Activated CD4-positive, alpha-beta T cell treated with anti-CD3 and anti-CD28 coated beads for 36 hours (primary cell): ENCODE measurements at regions of chr2 and their contacts with region 1.

Region 1: DNA sequence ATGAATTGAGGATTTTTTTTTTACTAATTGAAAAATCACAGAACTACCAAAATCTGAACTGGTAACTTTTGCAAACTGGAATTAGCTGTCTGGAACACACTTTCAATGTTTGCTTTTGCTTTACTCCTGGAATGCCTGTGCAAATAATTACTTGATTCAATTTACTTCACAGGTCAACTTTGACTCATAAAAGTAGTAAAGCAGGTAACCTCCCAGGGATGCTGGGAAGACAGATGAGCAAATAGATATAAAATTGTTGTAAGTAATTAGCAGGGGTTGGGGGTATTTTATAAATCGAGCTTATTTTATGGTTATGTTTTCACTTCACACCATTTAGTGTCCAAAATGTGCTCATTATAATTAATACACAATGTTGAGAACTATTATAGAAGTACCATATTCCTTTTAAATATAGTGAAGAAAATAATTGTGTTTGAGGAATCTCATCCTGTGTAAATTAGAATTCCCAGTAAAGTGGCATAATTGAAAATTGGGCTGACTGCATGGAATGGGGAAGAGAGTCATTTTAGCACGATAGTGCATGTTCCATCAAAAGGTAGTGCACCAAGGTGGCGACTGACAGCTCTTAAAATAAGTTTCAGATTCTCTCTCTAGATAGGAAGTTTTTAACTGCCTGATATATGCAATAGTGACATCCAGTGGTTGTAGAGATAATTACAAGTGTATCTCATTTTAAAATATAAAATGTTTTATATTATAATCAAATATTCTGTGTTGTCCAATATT is 398.1 kb upstream of the HNRNPA3 start:
- DNase-seq: peak; percentile 9
- ATAC-seq: peak; percentile 43
- H3K4me3 Mint-ChIP-seq: no peak overlapping the region
- H3K27ac Mint-ChIP-seq: no peak overlapping the region
- H3K4me1 Mint-ChIP-seq: peaks cover 14% of the 10 kb centered on the region
- H3K27me3 Mint-ChIP-seq: no peaks in the 10 kb centered on the region

Region 2: GRCh38 chr2:176565641-176566323 is 248.7 kb before region 1 on chr2:
- CTCF ChIA-PET with region 1: no interaction called
- POLR2A ChIA-PET with region 1: no interaction called
- intact Hi-C with region 1: no loop called
- DNase-seq: peak; percentile 4
- ATAC-seq: no peak
- H3K4me3 Mint-ChIP-seq: no peak overlapping the region
- H3K27ac Mint-ChIP-seq: no peak overlapping the region
- H3K4me1 Mint-ChIP-seq: no peaks in the 10 kb centered on the region
- H3K27me3 Mint-ChIP-seq: peaks cover 38% of the 10 kb centered on the region

Region 3: GRCh38 chr2:176781570-176782217 is 32.8 kb before region 1 on chr2:
- CTCF ChIA-PET with region 1: no interaction called
- POLR2A ChIA-PET with region 1: no interaction called
- intact Hi-C with region 1: no loop called
- DNase-seq: no peak
- ATAC-seq: peak; percentile 44
- H3K4me3 Mint-ChIP-seq: no peak overlapping the region
- H3K27ac Mint-ChIP-seq: peak overlapping the region; percentile 7
- H3K4me1 Mint-ChIP-seq: peaks cover 4% of the 10 kb centered on the region
- H3K27me3 Mint-ChIP-seq: no peaks in the 10 kb centered on the region

Region 4: GRCh38 chr2:176804392-176804791 is 10.1 kb before region 1 on chr2:
- CTCF ChIA-PET with region 1: interaction called, 10 read pairs
- POLR2A ChIA-PET with region 1: no interaction called
- intact Hi-C with region 1: no loop called
- DNase-seq: no peak
- ATAC-seq: no peak
- H3K4me3 Mint-ChIP-seq: no peak overlapping the region
- H3K27ac Mint-ChIP-seq: no peak overlapping the region
- H3K4me1 Mint-ChIP-seq: no peaks in the 10 kb centered on the region
- H3K27me3 Mint-ChIP-seq: no peaks in the 10 kb centered on the region

Region 5: GRCh38 chr2:176902454-176902853 is 88.0 kb after region 1 on chr2:
- CTCF ChIA-PET with region 1: no interaction called
- POLR2A ChIA-PET with region 1: no interaction called
- intact Hi-C with region 1: no loop called
- DNase-seq: no peak
- ATAC-seq: no peak
- H3K4me3 Mint-ChIP-seq: no peak overlapping the region
- H3K27ac Mint-ChIP-seq: no peak overlapping the region
- H3K4me1 Mint-ChIP-seq: no peaks in the 10 kb centered on the region
- H3K27me3 Mint-ChIP-seq: peaks cover 3% of the 10 kb centered on the region

Region 6: DNA sequence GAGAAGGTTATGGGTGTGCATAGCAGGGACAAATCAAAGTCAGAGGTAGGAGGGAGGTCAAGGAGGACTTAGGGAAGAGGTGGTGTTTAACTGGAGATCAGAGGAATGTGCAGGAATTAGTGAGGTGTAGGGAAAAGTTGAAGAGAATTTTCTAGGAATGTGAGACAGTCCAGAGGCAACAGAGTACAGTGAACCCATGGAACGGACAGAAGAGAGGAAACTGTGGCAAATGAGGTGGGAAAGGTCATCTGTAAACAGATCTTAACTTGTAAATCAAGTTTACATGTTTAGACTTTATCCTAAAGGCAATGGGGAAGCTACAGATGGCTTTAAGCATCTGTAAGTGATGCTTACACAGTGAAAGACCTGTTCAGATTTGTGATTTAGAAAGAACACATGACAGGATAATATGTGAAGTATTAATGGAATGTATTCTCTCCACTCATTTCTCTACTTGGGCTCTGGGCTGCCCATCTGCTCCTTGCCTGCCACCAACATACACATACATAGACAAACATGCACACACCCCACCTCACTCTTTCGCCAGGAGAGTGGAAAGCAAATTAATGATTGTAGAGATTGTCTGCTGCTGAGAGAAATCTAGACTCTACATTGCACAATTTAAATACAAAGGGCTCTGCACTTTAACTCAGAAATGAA is 510.9 kb after region 1 on chr2:
- CTCF ChIA-PET with region 1: no interaction called
- POLR2A ChIA-PET with region 1: no interaction called
- intact Hi-C with region 1: no loop called
- DNase-seq: no peak
- ATAC-seq: no peak
- H3K4me3 Mint-ChIP-seq: no peak overlapping the region
- H3K27ac Mint-ChIP-seq: no peak overlapping the region
- H3K4me1 Mint-ChIP-seq: peaks cover 8% of the 10 kb centered on the region
- H3K27me3 Mint-ChIP-seq: no peaks in the 10 kb centered on the region